Activated CD4-positive, alpha-beta memory T cell treated with anti-CD3 and anti-CD28 coated beads for 36 hours (primary cell): ENCODE measurements at regions of chr3 and their contacts with region 1.

Region 1: GRCh38 chr3:57755668-57756527 is at the start of gene SLMAP:
- DNase-seq: peak; percentile 98
- H3K4me3 Mint-ChIP-seq: peak within 1 kb of the TSS; percentile 97
- H3K27ac Mint-ChIP-seq: peak within 1 kb of the TSS; percentile 98
- H3K4me1 Mint-ChIP-seq: peaks cover 36% of the 10 kb centered on the region
- H3K27me3 Mint-ChIP-seq: no peaks in the 10 kb centered on the region
- total RNA-seq, gene SLMAP: 42.5 to 43.9 TPM

Region 2: GRCh38 chr3:57555738-57556458 is 200.0 kb before region 1 on chr3 and contains the start of gene PDE12:
- CTCF ChIA-PET with region 1: interaction called, 8 read pairs
- POLR2A ChIA-PET with region 1: interaction called, 3 read pairs
- intact Hi-C with region 1: loop called (anchors 1 kb)
- DNase-seq: peak; percentile 89
- H3K4me3 Mint-ChIP-seq: peak within 1 kb of the TSS; percentile 97
- H3K27ac Mint-ChIP-seq: peak within 1 kb of the TSS; percentile 96
- H3K4me1 Mint-ChIP-seq: peaks cover 34% of the 10 kb centered on the region
- H3K27me3 Mint-ChIP-seq: no peaks in the 10 kb centered on the region
- total RNA-seq, gene PDE12: 20.7 to 21.9 TPM

Region 3: DNA sequence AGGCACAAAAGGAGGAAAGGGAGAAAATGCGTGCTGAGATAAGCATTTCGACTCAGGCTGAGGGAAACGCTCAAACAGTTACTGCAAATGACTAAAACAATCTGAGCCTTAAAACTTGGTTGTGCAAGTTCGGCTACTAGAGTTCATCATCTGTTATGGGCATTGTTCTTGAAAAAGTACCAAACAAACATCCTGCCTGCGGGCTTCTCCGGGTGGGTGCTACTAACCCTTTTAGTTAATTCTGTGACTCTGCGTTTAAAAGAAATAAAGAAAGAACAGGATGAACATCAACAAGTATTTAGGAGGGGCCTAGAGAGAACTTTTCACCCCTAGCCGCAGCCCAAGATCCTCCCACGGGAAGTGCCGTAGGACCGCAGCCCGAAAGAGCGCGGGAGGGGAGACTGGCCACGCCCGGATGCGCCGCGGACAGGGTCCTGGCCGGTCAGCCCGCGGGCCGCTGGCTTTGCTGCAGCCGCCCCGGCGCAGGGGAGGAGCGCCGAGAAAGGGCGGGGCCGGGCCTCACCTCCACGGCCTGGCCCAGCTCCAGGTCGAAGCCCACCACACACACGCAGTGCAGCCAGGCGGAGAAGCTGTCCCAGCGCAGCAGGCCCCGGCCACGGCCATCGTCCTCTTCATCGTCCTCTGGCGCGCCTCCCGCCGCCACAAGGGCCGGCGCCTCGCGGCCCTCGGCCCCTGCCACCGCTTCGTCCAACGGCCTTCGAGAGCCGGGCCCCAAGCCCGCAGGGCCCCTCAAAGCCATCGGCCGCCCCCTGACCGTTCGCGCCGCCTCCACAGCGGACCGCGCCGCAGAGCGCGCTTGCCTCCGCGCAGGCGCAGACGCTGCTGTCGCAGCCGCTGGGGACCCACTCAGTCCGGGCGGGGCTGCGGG is 63.4 kb before region 1 on chr3 and contains the start of gene DENND6A:
- CTCF ChIA-PET with region 1: no interaction called
- POLR2A ChIA-PET with region 1: interaction called, 7 read pairs
- intact Hi-C with region 1: loop called (anchors 1 kb)
- DNase-seq: peak; percentile 97
- H3K4me3 Mint-ChIP-seq: peak within 1 kb of the TSS; percentile 81
- H3K27ac Mint-ChIP-seq: peak within 1 kb of the TSS; percentile 92
- H3K4me1 Mint-ChIP-seq: peaks cover 36% of the 10 kb centered on the region
- H3K27me3 Mint-ChIP-seq: no peaks in the 10 kb centered on the region
- total RNA-seq, gene DENND6A: 13.0 to 16.0 TPM

Region 4: DNA sequence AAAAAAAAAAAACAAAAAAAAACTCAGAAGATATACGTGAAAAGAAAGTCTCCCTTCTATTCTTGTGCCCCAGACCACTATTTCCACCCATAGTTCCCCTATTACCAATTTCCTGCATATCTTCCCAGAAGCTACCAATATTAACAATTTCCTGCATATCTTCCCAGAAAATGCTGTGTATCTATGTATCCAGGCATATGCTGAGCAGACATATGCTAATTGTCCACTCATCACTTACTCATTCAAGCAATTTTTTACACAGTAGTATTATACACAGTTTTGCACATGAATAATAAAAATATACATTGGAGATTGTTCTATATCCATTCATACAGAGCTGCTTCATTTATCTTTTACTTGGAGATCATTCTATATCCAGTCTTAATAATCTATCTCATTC is 12.4 kb before region 1 on chr3:
- CTCF ChIA-PET with region 1: no interaction called
- POLR2A ChIA-PET with region 1: no interaction called
- intact Hi-C with region 1: no loop called
- DNase-seq: no peak
- H3K4me3 Mint-ChIP-seq: no peak overlapping the region
- H3K27ac Mint-ChIP-seq: no peak overlapping the region
- H3K4me1 Mint-ChIP-seq: no peaks in the 10 kb centered on the region
- H3K27me3 Mint-ChIP-seq: peaks cover 1% of the 10 kb centered on the region

Region 5: DNA sequence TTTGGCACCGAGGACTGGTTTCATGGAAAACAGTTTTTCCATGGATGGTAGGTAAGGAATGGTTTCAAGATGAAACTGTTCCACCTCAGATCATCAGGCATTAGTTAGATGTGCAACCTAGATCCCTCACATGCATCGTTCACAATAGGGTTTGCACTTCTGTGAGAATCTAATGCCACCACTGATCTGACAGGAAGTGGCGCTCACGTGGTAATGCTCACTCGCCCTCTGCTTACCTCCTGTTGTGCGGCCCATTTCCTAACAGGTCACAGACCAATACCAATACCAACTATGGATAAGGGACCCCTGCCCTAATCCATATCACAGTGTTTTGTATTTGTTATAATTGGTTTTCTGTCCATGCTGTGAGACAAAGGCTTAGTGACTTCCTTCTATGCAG is 59.1 kb after region 1 on chr3:
- CTCF ChIA-PET with region 1: no interaction called
- POLR2A ChIA-PET with region 1: no interaction called
- intact Hi-C with region 1: loop called (anchors 5 kb)
- DNase-seq: peak; percentile 50
- H3K4me3 Mint-ChIP-seq: no peak overlapping the region
- H3K27ac Mint-ChIP-seq: no peak overlapping the region
- H3K4me1 Mint-ChIP-seq: peaks cover 38% of the 10 kb centered on the region
- H3K27me3 Mint-ChIP-seq: no peaks in the 10 kb centered on the region

Region 6: DNA sequence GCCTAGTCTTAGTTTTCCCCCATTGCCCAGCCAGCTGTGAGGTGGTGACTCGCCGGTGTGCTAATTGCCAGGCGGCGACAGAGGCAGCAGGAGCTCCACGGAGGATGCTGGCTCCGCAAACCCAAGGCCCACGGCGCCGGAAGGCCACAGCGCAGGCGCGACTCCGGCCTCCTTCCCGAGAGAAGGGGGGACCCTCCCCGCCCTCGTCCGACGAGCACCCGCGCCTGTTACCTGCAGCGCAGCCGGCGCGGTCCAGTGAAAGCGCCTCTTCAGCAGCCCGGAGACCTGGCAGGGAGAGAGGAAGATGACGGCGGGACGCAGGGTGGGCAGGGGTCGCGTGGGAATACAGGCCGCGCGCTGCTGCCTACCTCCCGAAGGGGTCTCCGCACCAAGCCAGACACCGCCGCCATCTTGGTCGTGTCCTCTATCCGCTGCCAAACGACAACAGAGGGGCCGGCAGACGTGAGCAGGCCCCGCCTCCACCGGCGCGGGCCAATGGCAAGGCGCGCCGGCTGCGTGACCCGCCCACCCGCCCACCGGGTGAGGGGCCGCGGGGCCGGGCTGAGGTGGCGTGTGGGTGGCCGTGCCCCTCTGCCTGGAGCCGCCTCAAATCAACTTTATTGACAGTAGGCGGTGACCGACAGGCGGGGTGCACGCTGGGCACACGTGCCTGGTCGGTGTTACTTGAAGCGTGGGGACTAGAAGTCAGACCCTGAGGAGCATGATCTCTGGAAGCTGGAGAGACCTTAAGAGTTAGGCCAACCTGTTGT is 677.7 kb after region 1 on chr3 and contains the start of gene PDHB:
- CTCF ChIA-PET with region 1: no interaction called
- POLR2A ChIA-PET with region 1: no interaction called
- intact Hi-C with region 1: loop called (anchors 5 kb)
- DNase-seq: peak; percentile 93
- H3K4me3 Mint-ChIP-seq: peak within 1 kb of the TSS; percentile 92
- H3K27ac Mint-ChIP-seq: peak within 1 kb of the TSS; percentile 91
- H3K4me1 Mint-ChIP-seq: peaks cover 24% of the 10 kb centered on the region
- H3K27me3 Mint-ChIP-seq: no peaks in the 10 kb centered on the region
- total RNA-seq, gene PDHB: 55.6 to 56.3 TPM